Activated CD8-positive, alpha-beta T cell treated with anti-CD3 and anti-CD28 coated beads for 36 hours (primary cell): ENCODE measurements at regions of chr14 and their contacts with region 1.

Region 1: DNA sequence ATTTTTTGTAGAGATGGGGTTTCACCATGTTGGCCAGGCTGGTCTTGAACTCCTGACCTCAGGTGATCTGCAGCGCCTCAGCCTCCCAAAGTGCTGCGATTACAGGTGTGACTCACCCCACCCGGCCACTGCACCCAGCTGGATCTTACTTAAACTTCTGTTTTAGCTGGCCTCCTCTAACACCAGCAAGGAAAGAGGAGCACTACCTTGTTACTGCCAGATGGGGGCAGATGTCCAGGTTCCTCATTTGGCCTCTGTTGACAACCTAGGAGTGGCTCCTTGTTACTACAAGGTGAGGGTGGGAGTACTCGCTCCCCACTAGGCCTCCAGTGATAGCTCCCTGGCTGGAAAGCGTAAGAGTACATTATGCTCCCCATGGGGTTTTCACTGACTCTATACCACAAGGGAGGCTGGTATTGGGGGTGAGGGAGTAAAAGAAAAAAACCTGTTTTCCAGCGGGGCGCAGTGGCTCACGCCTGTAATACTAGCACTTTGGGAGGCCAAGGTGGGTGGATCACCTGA is 13.1 kb upstream of the ARF6 start:
- DNase-seq: peak; percentile 84
- ATAC-seq: peak; percentile 98
- H3K4me3 Mint-ChIP-seq: no peak overlapping the region
- H3K27ac Mint-ChIP-seq: no peak overlapping the region
- H3K4me1 Mint-ChIP-seq: peaks cover 20% of the 10 kb centered on the region
- H3K27me3 Mint-ChIP-seq: no peaks in the 10 kb centered on the region
- CTCF ChIP-seq: peak; percentile 77

Region 2: DNA sequence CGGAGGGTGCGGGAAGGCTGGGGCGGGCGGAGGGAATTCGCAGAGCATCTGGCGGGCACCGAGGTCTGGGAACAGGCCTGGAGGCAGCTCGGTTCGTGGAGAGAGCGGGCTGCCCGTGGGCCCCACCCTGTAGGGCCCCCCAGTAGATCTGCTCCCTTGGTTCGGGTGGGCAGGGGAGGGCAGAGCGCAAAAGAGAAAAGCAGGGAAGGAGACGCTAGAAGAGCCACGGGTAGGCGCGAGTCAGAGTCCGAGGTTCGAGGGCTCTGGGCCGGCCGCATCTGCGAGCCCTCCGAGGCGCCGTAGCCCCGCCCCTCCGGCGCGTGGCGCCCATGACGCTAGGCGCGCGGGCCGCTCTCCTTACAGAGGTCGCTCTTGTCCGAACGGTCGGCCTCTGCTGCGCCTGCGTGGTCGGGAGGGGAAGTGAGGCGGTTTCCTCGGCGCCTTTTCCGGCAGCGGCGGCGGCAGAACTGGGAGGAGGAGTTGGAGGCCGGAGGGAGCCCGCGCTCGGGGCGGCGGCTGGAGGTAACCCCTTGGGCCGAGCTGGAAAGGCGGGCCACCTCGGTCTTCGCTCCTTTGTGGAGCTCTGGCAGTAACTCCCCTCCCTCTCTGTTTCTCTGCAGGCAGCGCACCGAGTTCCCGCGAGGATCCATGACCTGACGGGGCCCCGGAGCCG is 13.0 kb after region 1 on chr14 and contains the start of gene ARF6:
- CTCF ChIA-PET with region 1: interaction called, 15 read pairs
- POLR2A ChIA-PET with region 1: interaction called, 17 read pairs
- intact Hi-C with region 1: no loop called
- DNase-seq: peak; percentile 98
- ATAC-seq: peak; percentile 80
- H3K4me3 Mint-ChIP-seq: peak within 1 kb of the TSS; percentile 88
- H3K27ac Mint-ChIP-seq: peak within 1 kb of the TSS; percentile 97
- H3K4me1 Mint-ChIP-seq: peaks cover 4% of the 10 kb centered on the region
- H3K27me3 Mint-ChIP-seq: no peaks in the 10 kb centered on the region
- CTCF ChIP-seq: no peak
- total RNA-seq, gene ARF6: 170 TPM

Region 3: GRCh38 chr14:49934646-49935045 is 54.9 kb after region 1 on chr14:
- CTCF ChIA-PET with region 1: no interaction called
- POLR2A ChIA-PET with region 1: no interaction called
- intact Hi-C with region 1: no loop called
- DNase-seq: no peak
- ATAC-seq: no peak
- H3K4me3 Mint-ChIP-seq: no peak overlapping the region
- H3K27ac Mint-ChIP-seq: no peak overlapping the region
- H3K4me1 Mint-ChIP-seq: peaks cover 10% of the 10 kb centered on the region
- H3K27me3 Mint-ChIP-seq: no peaks in the 10 kb centered on the region
- CTCF ChIP-seq: no peak

Region 4: GRCh38 chr14:50101417-50101816 is 221.7 kb after region 1 on chr14:
- CTCF ChIA-PET with region 1: interaction called, 11 read pairs
- POLR2A ChIA-PET with region 1: interaction called, 3 read pairs
- intact Hi-C with region 1: no loop called
- DNase-seq: no peak
- ATAC-seq: no peak
- H3K4me3 Mint-ChIP-seq: no peak overlapping the region
- H3K27ac Mint-ChIP-seq: no peak overlapping the region
- H3K4me1 Mint-ChIP-seq: peaks cover 66% of the 10 kb centered on the region
- H3K27me3 Mint-ChIP-seq: no peaks in the 10 kb centered on the region
- CTCF ChIP-seq: no peak